ENCODE measurements at regions of chr12 and their contacts with region 1.

Region 1: GRCh38 chr12:68364893-68365725 is 32.9 kb upstream of the MDM1 start:
- DNase-seq: peak; percentile 82 to 93
- ATAC-seq: peak; percentile 72 to 88 (median 79)
- H3K4me3 ChIP-seq: peak overlapping the region; percentile 21
- H3K4me3 Mint-ChIP-seq: peak overlapping the region; percentile 83
- H3K27ac ChIP-seq: peak overlapping the region; percentile 93
- H3K27ac Mint-ChIP-seq: peak overlapping the region; percentile 91
- H3K4me1 ChIP-seq: peaks cover 59% of the 10 kb centered on the region
- H3K4me1 Mint-ChIP-seq: peaks cover 73 to 75% of the 10 kb centered on the region in 2 donors
- H3K27me3 ChIP-seq: no peaks in the 10 kb centered on the region
- H3K27me3 Mint-ChIP-seq: no peaks in the 10 kb centered on the region
- CTCF ChIP-seq: no peak

Region 2: GRCh38 chr12:68420225-68421010 is 55.3 kb after region 1 on chr12:
- intact Hi-C with region 1: loop called (anchors 2 kb)
- DNase-seq: peak in 1 of 2 donors; percentile 15
- ATAC-seq: peak; percentile 40 to 56 (median 40)
- H3K4me3 ChIP-seq: no peak overlapping the region
- H3K4me3 Mint-ChIP-seq: peak overlapping the region; percentile 78
- H3K27ac ChIP-seq: peak overlapping the region; percentile 75
- H3K27ac Mint-ChIP-seq: peak overlapping the region; percentile 88 to 91
- H3K4me1 ChIP-seq: peaks cover 57% of the 10 kb centered on the region
- H3K4me1 Mint-ChIP-seq: peaks cover 69 to 77% of the 10 kb centered on the region in 2 donors
- H3K27me3 ChIP-seq: no peaks in the 10 kb centered on the region
- H3K27me3 Mint-ChIP-seq: no peaks in the 10 kb centered on the region
- CTCF ChIP-seq: no peak

Region 3: GRCh38 chr12:68482660-68483059 is 117.6 kb after region 1 on chr12:
- intact Hi-C with region 1: loop called (anchors 5 kb)
- DNase-seq: peak; percentile 36 to 53
- ATAC-seq: peak; percentile 80 to 94 (median 85)
- H3K4me3 ChIP-seq: no peak overlapping the region
- H3K4me3 Mint-ChIP-seq: peak overlapping the region; percentile 61
- H3K27ac ChIP-seq: peak overlapping the region; percentile 76
- H3K27ac Mint-ChIP-seq: peak overlapping the region; percentile 87 to 89
- H3K4me1 ChIP-seq: peaks cover 13% of the 10 kb centered on the region
- H3K4me1 Mint-ChIP-seq: peaks cover 35% of the 10 kb centered on the region in 2 donors
- H3K27me3 ChIP-seq: no peaks in the 10 kb centered on the region
- H3K27me3 Mint-ChIP-seq: no peaks in the 10 kb centered on the region
- CTCF ChIP-seq: no peak

Region 4: GRCh38 chr12:68591734-68592418 is 226.8 kb after region 1 on chr12:
- intact Hi-C with region 1: loop called (anchors 5 kb)
- DNase-seq: peak in 1 of 2 donors; percentile 82
- ATAC-seq: peak; percentile 65 to 85 (median 66)
- H3K4me3 ChIP-seq: no peak overlapping the region
- H3K4me3 Mint-ChIP-seq: peak overlapping the region; percentile 39
- H3K27ac ChIP-seq: peak overlapping the region; percentile 56
- H3K27ac Mint-ChIP-seq: peak overlapping the region; percentile 84 to 87
- H3K4me1 ChIP-seq: peaks cover 35% of the 10 kb centered on the region
- H3K4me1 Mint-ChIP-seq: peaks cover 33 to 44% of the 10 kb centered on the region in 2 donors
- H3K27me3 ChIP-seq: no peaks in the 10 kb centered on the region
- H3K27me3 Mint-ChIP-seq: no peaks in the 10 kb centered on the region
- CTCF ChIP-seq: no peak

Region 5: GRCh38 chr12:68807576-68808387 is 442.7 kb after region 1 on chr12 and contains the start of gene MDM2:
- intact Hi-C with region 1: loop called (anchors 5 kb)
- DNase-seq: peak; percentile 99
- ATAC-seq: peak; percentile 88 to 97 (median 93)
- H3K4me3 ChIP-seq: peak within 1 kb of the TSS; percentile 94
- H3K4me3 Mint-ChIP-seq: peak within 1 kb of the TSS; percentile 91
- H3K27ac ChIP-seq: peak within 1 kb of the TSS; percentile 98
- H3K27ac Mint-ChIP-seq: peak within 1 kb of the TSS; percentile 96 to 97
- H3K4me1 ChIP-seq: peaks cover 18% of the 10 kb centered on the region
- H3K4me1 Mint-ChIP-seq: peaks cover 13 to 19% of the 10 kb centered on the region in 2 donors
- H3K27me3 ChIP-seq: no peaks in the 10 kb centered on the region
- H3K27me3 Mint-ChIP-seq: no peaks in the 10 kb centered on the region
- CTCF ChIP-seq: peak; percentile 75
- total RNA-seq, gene MDM2: 130 to 143 (median 132) TPM